Posterior vena cava (tissue), 2 donors: ENCODE measurements at regions of chr12 and their contacts with region 1.

Region 1: GRCh38 chr12:82619644-82620043 is 67.1 kb upstream of the TMTC2 start:
- DNase-seq: no peak

Region 2: DNA sequence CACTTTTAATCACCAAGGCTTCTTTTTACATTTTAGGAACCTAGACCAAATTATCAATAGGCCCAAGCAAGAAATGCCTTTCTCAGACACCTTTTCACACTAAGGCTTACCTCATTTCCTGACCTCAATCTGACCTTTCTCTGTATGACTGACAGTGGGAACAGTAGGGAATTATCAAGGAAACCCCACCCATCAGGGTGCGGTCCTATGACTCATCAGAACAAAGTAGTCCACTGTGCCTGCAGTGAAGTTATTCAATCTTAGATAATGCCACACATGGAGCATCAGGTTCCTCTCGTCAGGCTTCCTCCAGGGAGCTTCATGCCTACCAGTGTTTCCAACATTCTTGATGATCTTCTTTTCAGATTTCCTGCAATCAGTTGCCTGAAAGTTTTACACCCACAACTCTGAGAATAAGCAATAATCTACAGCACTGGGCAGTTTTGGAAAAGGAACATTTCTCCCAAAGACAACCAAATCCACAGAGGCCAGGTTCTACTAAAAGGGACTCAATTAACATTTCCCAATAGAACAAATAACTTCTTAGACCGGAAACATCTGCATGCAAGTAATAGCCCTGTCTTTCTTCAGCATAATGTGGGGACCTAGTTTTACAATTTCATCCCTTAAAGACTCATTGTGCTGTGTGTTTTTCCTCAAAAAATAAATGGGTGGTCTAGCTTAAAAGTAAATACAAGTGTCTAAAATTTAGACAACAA is 31.1 kb after region 1 on chr12:
- intact Hi-C with region 1: no loop called
- DNase-seq: no peak

Region 3: DNA sequence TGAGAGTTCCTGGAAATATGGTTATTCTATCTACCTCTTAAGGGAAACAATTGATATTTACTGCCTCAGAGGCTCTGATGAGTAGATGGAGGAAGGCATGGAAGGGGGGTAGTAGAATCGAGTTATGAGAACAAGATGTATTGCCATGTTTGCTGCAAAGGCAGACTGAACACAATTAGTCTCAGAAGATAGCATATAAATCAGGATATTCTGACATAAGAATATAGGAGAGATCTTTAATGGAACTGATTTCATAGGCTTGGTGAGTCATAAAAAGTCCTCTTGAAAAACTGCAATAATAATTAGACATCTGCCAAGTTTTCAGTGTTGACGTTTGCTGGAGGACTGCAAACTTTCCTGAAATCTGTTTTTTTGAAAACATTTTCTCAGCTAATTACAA is 703.2 kb after region 1 on chr12:
- intact Hi-C with region 1: loop called in 1 of 2 experiments (anchors 5 kb)
- DNase-seq: no peak